Heart right ventricle (tissue), 16 donors: ENCODE measurements at regions of chr16 and their contacts with region 1.

Region 1: GRCh38 chr16:87487361-87488001 is 5.3 kb downstream of the ZCCHC14 start:
- DNase-seq: peak in 1 of 2 donors; percentile 48
- ATAC-seq: peak in 7 of 8 donors; percentile 40 to 55 (median 44)
- H3K4me3 ChIP-seq: peak overlapping the region in 4 of 10 donors; percentile 6 to 22 (median 9)
- H3K27ac ChIP-seq: peak overlapping the region in 4 of 10 donors; percentile 0 to 48 (median 22)
- H3K4me1 ChIP-seq: peaks cover 21 to 92% (median 80%) of the 10 kb centered on the region in 9 donors
- H3K27me3 ChIP-seq: no peaks in the 10 kb centered on the region
- CTCF ChIP-seq: no peak

Region 2: DNA sequence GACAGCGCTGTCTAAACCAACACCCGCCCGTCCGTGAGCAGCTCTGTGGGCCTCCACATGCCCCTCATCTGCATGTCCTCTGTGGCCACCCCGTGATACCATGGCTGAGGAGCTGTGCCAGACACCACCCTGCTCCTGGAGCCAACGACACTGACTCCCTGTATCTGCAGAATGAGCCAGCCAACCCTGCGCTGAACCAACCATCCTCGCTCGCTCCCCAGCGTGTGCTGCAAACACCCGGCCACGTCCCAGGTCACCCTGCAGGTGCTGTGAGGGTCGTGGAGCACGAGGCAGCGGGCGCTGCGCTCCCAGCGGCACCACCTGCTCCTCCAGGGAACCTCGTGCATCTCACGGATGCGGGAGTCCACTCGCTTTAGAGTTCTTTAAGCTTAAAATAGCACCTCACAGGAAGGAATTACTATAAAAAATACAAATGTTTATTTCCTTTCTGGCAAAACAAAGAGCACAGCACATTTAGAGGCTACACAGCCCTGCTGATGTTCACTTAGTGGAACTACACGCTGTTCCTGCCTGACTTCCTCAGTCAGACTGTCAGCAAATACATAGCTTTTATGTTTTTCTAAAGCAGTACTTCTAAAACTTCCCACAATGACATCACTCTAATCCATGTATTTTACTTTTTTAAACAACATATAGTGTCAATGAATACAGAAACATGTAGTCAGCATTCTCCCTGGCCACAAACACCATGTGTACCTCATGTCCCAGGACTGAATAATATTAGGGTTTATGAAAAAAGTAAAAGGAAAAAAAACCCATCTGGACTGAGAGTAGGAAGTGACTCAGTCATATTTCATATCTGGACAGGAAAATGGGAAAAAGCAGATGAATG is 51.9 kb before region 1 on chr16:
- intact Hi-C with region 1: loop called in 1 of 10 experiments (anchors 10 kb)
- DNase-seq: peak in 1 of 2 donors; percentile 12
- ATAC-seq: peak; percentile 50 to 89 (median 81)
- H3K4me3 ChIP-seq: peak overlapping the region in 8 of 10 donors; percentile 12 to 34 (median 24)
- H3K27ac ChIP-seq: peak overlapping the region; percentile 37 to 79 (median 69)
- H3K4me1 ChIP-seq: peaks cover 16 to 64% (median 35%) of the 10 kb centered on the region in 9 donors
- H3K27me3 ChIP-seq: no peaks in the 10 kb centered on the region
- CTCF ChIP-seq: no peak

Region 3: DNA sequence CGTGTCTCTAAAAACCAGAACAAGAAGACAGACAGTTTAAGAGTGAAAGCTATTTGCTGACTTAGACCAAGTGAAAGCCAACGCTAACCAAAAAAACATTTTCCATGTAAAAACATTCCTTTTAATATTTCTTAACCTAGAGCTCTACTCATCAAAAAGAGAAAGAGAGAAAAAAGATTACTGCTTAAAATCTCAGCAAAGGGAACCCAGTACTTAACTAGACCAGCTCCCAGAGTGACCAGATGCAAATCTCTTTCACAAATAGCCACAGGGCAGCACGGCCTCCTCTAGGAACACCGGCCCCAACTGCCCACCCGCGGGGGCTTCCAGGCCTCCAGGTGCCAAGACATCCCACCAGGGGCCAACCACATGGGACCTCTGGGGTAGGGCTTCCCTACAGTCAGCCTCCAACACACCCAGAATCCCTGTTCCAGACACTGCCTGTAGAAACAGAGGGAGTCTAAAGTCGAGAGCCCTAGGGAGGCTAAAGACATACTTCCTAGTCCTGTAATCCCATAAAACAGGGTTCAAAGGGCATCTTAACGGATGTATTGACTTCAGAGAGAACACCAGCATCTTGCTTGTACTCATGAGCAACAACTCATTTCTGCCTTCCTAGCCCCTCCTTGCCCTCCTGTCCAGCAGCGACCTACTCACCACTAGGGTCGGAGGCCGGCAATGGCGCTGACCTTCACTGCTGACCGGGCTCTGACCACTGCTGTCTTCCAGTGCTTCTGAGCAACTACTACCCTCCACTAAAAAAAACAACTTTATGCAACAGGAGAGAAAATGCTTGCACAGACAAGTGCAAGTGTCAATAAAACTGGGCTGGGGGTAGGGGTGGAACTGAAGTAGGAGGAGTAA is 16.0 kb before region 1 on chr16:
- intact Hi-C with region 1: loop called in 1 of 10 experiments (anchors 1 kb)
- DNase-seq: no peak
- ATAC-seq: peak in 6 of 8 donors; percentile 17 to 42 (median 28)
- H3K4me3 ChIP-seq: no peak overlapping the region
- H3K27ac ChIP-seq: peak overlapping the region in 8 of 10 donors; percentile 12 to 80 (median 44)
- H3K4me1 ChIP-seq: peaks cover 5 to 93% (median 66%) of the 10 kb centered on the region in 9 donors
- H3K27me3 ChIP-seq: no peaks in the 10 kb centered on the region
- CTCF ChIP-seq: no peak

Region 4: GRCh38 chr16:87540945-87541877 is 53.7 kb after region 1 on chr16:
- intact Hi-C with region 1: no loop called
- DNase-seq: peak; percentile 58 to 61
- ATAC-seq: peak; percentile 48 to 78 (median 70)
- H3K4me3 ChIP-seq: peak overlapping the region in 7 of 10 donors; percentile 11 to 43 (median 31)
- H3K27ac ChIP-seq: peak overlapping the region in 9 of 10 donors; percentile 41 to 77 (median 66)
- H3K4me1 ChIP-seq: peaks cover 0 to 34% (median 16%) of the 10 kb centered on the region in 9 donors
- H3K27me3 ChIP-seq: peaks cover 0 to 36% (median 17%) of the 10 kb centered on the region in 7 donors
- CTCF ChIP-seq: no peak